Endothelial cell of umbilical vein (primary cell): ENCODE measurements at regions of chr2 and their contacts with region 1.

Region 1: DNA sequence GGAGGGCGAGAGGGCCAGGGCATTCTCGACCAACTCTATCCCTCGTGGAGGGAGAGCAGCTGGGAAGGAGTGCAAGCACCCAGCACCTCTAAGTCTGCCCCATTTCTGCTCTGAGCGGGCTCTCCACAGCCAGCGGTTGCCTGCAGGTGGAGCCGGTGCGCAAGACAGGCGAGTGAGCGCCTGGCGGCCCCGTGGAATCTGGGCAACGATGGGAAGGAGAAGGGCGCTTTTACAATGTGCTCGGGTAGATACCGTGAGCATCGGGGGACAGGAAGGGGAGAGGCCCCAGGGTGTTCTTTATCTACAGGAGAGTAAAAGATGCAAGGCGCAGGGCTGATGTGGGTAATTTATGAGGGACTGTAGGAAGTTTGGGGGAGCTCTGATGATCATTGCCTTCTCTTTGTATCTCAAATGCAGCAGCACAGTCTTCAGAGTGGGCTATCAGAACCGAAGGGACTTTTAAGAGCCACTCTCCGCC is 867 bp upstream of the TTL start:
- DNase-seq: peak; percentile 85
- H3K4me3 ChIP-seq: peak overlapping the region; percentile 49 to 90 (median 61)
- H3K27ac ChIP-seq: peak overlapping the region; percentile 45
- H3K4me1 ChIP-seq: peaks cover 10% of the 10 kb centered on the region
- H3K27me3 ChIP-seq: no peaks in the 10 kb centered on the region
- CTCF ChIP-seq: peak; percentile 80 to 92
- POLR2A ChIP-seq: no peak

Region 2: GRCh38 chr2:112462178-112462577 is 18.9 kb before region 1 on chr2:
- CTCF ChIA-PET with region 1: no interaction called
- POLR2A ChIA-PET with region 1: no interaction called
- dilution Hi-C with region 1: no loop called
- intact Hi-C with region 1: no loop called
- DNase-seq: no peak
- H3K4me3 ChIP-seq: no peak overlapping the region
- H3K27ac ChIP-seq: no peak overlapping the region
- H3K4me1 ChIP-seq: no peaks in the 10 kb centered on the region
- H3K27me3 ChIP-seq: peaks cover 0 to 14% of the 10 kb centered on the region in 2 experiments
- CTCF ChIP-seq: no peak
- POLR2A ChIP-seq: no peak

Region 3: GRCh38 chr2:112493858-112494648 is 13.0 kb after region 1 on chr2:
- CTCF ChIA-PET with region 1: interaction called, 25 read pairs
- POLR2A ChIA-PET with region 1: no interaction called
- dilution Hi-C with region 1: no loop called
- intact Hi-C with region 1: no loop called
- DNase-seq: peak; percentile 28
- H3K4me3 ChIP-seq: no peak overlapping the region
- H3K27ac ChIP-seq: no peak overlapping the region
- H3K4me1 ChIP-seq: peaks cover 19% of the 10 kb centered on the region
- H3K27me3 ChIP-seq: no peaks in the 10 kb centered on the region
- CTCF ChIP-seq: no peak
- POLR2A ChIP-seq: no peak

Region 4: GRCh38 chr2:112542984-112543661 is 62.0 kb after region 1 on chr2:
- CTCF ChIA-PET with region 1: interaction called, 4 read pairs
- POLR2A ChIA-PET with region 1: no interaction called
- dilution Hi-C with region 1: no loop called
- intact Hi-C with region 1: loop called (anchors 1 kb)
- DNase-seq: peak; percentile 54
- H3K4me3 ChIP-seq: peak overlapping the region; percentile 64 to 87 (median 82)
- H3K27ac ChIP-seq: peak overlapping the region; percentile 76
- H3K4me1 ChIP-seq: peaks cover 14% of the 10 kb centered on the region
- H3K27me3 ChIP-seq: no peaks in the 10 kb centered on the region
- CTCF ChIP-seq: no peak
- POLR2A ChIP-seq: no peak